CD8-positive, alpha-beta T cell (primary cell): ENCODE measurements at regions of chr4 and their contacts with region 1.

Region 1: DNA sequence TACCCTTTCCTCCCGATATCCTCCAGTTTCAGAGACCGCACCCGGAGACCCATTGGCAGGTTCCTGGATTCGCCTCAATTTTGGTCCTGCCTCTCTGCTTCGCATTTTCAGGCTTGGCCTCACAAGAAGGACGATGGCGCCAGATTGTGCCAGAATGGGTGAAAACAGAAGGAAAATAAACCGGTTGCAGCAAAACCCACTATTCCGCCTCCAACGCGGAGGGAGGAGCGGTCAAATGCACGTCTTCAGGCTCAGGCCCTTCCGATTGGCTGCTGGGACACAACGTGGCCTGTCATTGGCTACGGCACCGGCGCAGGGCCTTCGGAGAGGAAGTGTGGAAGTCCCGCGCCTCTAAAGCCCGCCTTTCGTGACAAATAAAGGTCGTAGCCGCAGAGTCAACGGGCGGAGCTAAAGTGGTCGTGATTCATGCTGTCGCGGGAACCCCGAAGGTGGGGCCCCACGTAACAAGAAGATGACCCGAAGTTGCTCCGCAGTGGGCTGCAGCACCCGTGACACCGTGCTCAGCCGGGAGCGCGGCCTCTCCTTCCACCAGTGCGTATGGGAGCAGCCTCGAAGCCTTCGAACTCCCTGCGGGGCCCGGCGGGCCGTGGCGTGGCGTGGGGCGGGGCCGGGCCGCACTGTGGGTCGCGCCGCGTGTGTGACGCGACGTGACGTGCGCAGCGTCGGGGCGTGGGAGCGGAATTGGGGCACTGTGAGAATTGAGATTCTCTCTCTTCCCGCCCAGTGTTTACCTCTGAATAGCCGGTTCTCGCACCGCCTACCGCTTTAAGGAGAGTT is at the start of gene THAP9:
- DNase-seq: peak; percentile 95 to 100 (median 97)
- ATAC-seq: peak; percentile 88
- H3K4me3 ChIP-seq: peak within 1 kb of the TSS; percentile 73 to 84
- H3K4me3 Mint-ChIP-seq: no peak within 1 kb of the TSS
- H3K27ac ChIP-seq: peak within 1 kb of the TSS; percentile 93 to 99
- H3K27ac Mint-ChIP-seq: no peak within 1 kb of the TSS
- H3K4me1 ChIP-seq: peaks cover 30% of the 10 kb centered on the region
- H3K4me1 Mint-ChIP-seq: peaks cover 21% of the 10 kb centered on the region
- H3K27me3 ChIP-seq: no peaks in the 10 kb centered on the region
- H3K27me3 Mint-ChIP-seq: no peaks in the 10 kb centered on the region
- CTCF ChIP-seq: no peak
- total RNA-seq, gene THAP9: 5.2 to 7.3 TPM

Region 2: GRCh38 chr4:82481506-82481840 is 419.1 kb before region 1 on chr4:
- CTCF ChIA-PET with region 1: no interaction called
- POLR2A ChIA-PET with region 1: no interaction called
- intact Hi-C with region 1: no loop called
- DNase-seq: peak in 1 of 9 experiments; percentile 11
- ATAC-seq: no peak
- H3K4me3 ChIP-seq: no peak overlapping the region
- H3K4me3 Mint-ChIP-seq: no peak overlapping the region
- H3K27ac ChIP-seq: no peak overlapping the region
- H3K27ac Mint-ChIP-seq: no peak overlapping the region
- H3K4me1 ChIP-seq: no peaks in the 10 kb centered on the region
- H3K4me1 Mint-ChIP-seq: no peaks in the 10 kb centered on the region
- H3K27me3 ChIP-seq: no peaks in the 10 kb centered on the region
- H3K27me3 Mint-ChIP-seq: no peaks in the 10 kb centered on the region
- CTCF ChIP-seq: no peak

Region 3: DNA sequence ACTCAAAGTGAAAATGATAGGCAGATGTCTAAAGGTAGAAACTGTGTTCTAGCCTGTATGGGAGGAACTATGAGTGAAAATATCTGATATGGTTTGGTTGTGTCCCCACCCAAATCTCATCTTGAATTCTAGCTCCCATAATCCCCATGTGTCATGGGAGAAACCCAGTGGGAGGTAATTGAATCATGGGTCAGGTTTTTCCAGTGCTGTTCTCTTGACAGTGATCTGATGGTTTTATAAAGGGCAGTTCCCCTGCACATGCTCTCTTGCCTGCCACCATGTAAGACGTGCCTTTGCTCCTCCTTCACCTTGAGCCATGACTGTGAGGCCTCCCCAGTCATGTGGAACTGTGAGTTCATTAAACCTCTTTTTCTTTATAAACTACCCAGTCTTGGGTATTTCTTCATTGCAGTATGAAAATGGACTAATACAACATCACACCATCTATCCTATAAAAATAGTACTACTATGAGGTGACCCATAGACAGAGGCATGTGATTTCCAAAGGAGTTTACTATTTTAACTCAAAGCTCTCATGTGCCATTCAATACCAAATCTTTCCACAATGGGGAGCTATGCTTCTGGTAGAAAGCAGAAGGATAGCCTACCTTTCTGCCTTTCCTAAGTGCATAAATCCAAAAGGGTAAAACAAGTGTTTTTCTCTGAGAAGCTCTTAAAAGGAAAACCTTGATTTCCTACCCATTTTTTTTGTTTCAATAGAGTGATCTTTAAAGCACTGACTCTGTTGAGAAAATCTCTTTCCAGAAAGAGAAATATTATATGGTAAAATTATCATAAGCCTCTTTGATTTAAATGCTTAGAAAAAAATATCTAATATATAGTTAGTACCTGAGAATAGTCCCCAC is 48.4 kb before region 1 on chr4:
- CTCF ChIA-PET with region 1: interaction called, 5 read pairs
- POLR2A ChIA-PET with region 1: interaction called, 3 read pairs
- intact Hi-C with region 1: loop called in 1 of 2 experiments (anchors 5 kb)
- DNase-seq: peak in 2 of 9 experiments; percentile 46 to 60
- ATAC-seq: peak; percentile 54
- H3K4me3 ChIP-seq: no peak overlapping the region
- H3K4me3 Mint-ChIP-seq: no peak overlapping the region
- H3K27ac ChIP-seq: no peak overlapping the region
- H3K27ac Mint-ChIP-seq: no peak overlapping the region
- H3K4me1 ChIP-seq: no peaks in the 10 kb centered on the region
- H3K4me1 Mint-ChIP-seq: no peaks in the 10 kb centered on the region
- H3K27me3 ChIP-seq: no peaks in the 10 kb centered on the region
- H3K27me3 Mint-ChIP-seq: no peaks in the 10 kb centered on the region
- CTCF ChIP-seq: peak; percentile 65

Region 4: DNA sequence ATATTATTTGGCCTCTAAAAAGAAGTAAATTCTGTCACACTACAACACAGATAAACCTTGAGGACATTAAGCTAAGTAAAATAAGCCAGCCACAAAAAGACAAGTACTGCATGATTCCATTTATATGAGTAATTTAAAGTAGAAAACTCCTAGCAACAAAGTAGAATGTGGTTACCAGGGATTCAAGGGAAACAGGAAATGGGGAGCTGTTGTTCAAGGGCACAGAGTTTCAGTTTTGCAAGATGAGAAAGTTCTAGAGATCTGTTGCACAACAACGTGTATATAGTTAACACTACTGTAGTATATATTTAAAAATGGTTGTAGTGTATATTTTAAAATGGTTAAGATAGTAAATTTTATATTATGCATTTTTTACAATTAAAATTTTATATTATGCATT is 34.9 kb before region 1 on chr4:
- CTCF ChIA-PET with region 1: interaction called, 3 read pairs
- POLR2A ChIA-PET with region 1: no interaction called
- intact Hi-C with region 1: loop called in 1 of 2 experiments (anchors 5 kb)
- DNase-seq: peak in 2 of 9 experiments; percentile 16 to 55
- ATAC-seq: no peak
- H3K4me3 ChIP-seq: no peak overlapping the region
- H3K4me3 Mint-ChIP-seq: peak overlapping the region; percentile 17
- H3K27ac ChIP-seq: peak overlapping the region in 1 of 2 experiments; percentile 37
- H3K27ac Mint-ChIP-seq: peak overlapping the region; percentile 62
- H3K4me1 ChIP-seq: peaks cover 6% of the 10 kb centered on the region
- H3K4me1 Mint-ChIP-seq: peaks cover 23% of the 10 kb centered on the region
- H3K27me3 ChIP-seq: no peaks in the 10 kb centered on the region
- H3K27me3 Mint-ChIP-seq: no peaks in the 10 kb centered on the region
- CTCF ChIP-seq: no peak

Region 5: DNA sequence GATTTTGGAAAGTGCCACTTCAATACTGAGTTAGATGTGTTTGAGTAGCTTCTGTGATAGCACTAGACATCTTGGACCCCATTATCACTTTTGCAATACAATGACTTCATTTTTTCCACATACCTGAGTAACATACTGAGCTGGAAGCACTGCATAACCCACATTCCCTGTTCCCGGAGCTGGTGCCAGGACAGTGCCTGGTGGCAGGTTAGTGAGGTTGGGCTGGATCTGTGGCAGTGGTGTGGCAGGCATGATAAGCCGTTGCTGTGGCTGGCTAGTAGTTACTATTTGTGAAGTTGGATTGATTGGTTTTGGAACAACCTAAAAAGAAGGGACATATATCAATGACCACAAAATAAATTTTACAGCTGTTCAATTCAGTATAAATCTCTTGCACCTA is 38.9 kb after region 1 on chr4:
- CTCF ChIA-PET with region 1: no interaction called
- POLR2A ChIA-PET with region 1: no interaction called
- intact Hi-C with region 1: no loop called
- DNase-seq: peak in 1 of 9 experiments; percentile 11
- ATAC-seq: no peak
- H3K4me3 ChIP-seq: no peak overlapping the region
- H3K4me3 Mint-ChIP-seq: no peak overlapping the region
- H3K27ac ChIP-seq: no peak overlapping the region
- H3K27ac Mint-ChIP-seq: no peak overlapping the region
- H3K4me1 ChIP-seq: no peaks in the 10 kb centered on the region
- H3K4me1 Mint-ChIP-seq: no peaks in the 10 kb centered on the region
- H3K27me3 ChIP-seq: no peaks in the 10 kb centered on the region
- H3K27me3 Mint-ChIP-seq: no peaks in the 10 kb centered on the region
- CTCF ChIP-seq: no peak

Region 6: GRCh38 chr4:83012687-83013419 is 112.3 kb after region 1 on chr4:
- CTCF ChIA-PET with region 1: interaction called, 7 read pairs
- POLR2A ChIA-PET with region 1: interaction called, 20 read pairs
- intact Hi-C with region 1: loop called (anchors 1 to 2 kb)
- DNase-seq: peak; percentile 94 to 98 (median 96)
- ATAC-seq: peak; percentile 88
- H3K4me3 ChIP-seq: peak overlapping the region; percentile 54 to 69
- H3K4me3 Mint-ChIP-seq: peak overlapping the region; percentile 90
- H3K27ac ChIP-seq: peak overlapping the region; percentile 56 to 95
- H3K27ac Mint-ChIP-seq: peak overlapping the region; percentile 91
- H3K4me1 ChIP-seq: peaks cover 31% of the 10 kb centered on the region
- H3K4me1 Mint-ChIP-seq: peaks cover 40% of the 10 kb centered on the region
- H3K27me3 ChIP-seq: no peaks in the 10 kb centered on the region
- H3K27me3 Mint-ChIP-seq: no peaks in the 10 kb centered on the region
- CTCF ChIP-seq: peak; percentile 65

Region 7: GRCh38 chr4:83034630-83035494 is 134.3 kb after region 1 on chr4 and contains the start of gene COPS4:
- CTCF ChIA-PET with region 1: interaction called, 4 read pairs
- POLR2A ChIA-PET with region 1: interaction called, 13 read pairs
- intact Hi-C with region 1: loop called (anchors 1 kb)
- DNase-seq: peak; percentile 87 to 100 (median 94)
- ATAC-seq: peak; percentile 98
- H3K4me3 ChIP-seq: peak within 1 kb of the TSS; percentile 73 to 90
- H3K4me3 Mint-ChIP-seq: peak within 1 kb of the TSS; percentile 99
- H3K27ac ChIP-seq: peak within 1 kb of the TSS; percentile 76 to 92
- H3K27ac Mint-ChIP-seq: peak within 1 kb of the TSS; percentile 99
- H3K4me1 ChIP-seq: peaks cover 16% of the 10 kb centered on the region
- H3K4me1 Mint-ChIP-seq: peaks cover 41% of the 10 kb centered on the region
- H3K27me3 ChIP-seq: no peaks in the 10 kb centered on the region
- H3K27me3 Mint-ChIP-seq: no peaks in the 10 kb centered on the region
- CTCF ChIP-seq: peak; percentile 51
- total RNA-seq, gene COPS4: 32.2 to 35.2 TPM